ENCODE measurements at regions of chr11 and their contacts with region 1.

Region 1: DNA sequence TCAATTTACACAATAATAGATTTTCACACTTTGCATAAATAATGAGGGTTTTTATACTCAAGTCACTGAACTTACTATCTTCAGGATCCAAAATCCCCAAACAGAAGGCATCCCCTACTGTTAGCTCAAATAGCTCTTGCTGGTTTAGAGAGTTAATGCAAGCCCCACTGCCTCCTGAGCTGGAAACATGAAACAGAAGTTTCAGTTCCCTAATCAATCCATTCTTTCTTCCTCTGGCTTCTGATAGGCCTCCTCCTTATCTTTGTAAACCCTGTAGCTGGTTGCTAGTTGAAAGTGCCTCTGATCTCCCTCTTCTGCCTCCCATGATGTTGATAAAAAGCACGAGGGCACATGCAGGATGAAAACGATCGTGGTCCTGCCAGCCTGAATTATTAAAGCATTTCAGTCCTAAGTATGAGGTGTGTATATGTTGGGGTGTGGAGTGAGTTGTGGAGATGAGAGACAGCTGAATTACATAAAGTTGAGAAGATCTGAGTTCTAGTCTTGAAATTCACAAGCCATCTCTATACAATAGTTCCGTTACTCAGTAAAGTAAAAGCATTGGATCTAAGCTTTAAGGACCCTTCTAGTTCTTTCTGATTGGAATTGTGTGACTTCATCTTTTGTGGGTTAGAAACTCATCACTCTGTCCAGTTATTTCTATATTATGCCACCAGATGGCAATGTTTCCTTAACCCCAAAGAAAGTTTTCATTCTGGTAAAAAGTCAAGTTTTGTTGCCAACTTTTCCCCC is 35.0 kb upstream of the EHF start:
- DNase-seq: no peak
- ATAC-seq: peak; percentile 74
- H3K4me3 ChIP-seq: no peak overlapping the region
- H3K4me1 ChIP-seq: no peaks in the 10 kb centered on the region
- CTCF ChIP-seq: peak; percentile 37

Region 2: DNA sequence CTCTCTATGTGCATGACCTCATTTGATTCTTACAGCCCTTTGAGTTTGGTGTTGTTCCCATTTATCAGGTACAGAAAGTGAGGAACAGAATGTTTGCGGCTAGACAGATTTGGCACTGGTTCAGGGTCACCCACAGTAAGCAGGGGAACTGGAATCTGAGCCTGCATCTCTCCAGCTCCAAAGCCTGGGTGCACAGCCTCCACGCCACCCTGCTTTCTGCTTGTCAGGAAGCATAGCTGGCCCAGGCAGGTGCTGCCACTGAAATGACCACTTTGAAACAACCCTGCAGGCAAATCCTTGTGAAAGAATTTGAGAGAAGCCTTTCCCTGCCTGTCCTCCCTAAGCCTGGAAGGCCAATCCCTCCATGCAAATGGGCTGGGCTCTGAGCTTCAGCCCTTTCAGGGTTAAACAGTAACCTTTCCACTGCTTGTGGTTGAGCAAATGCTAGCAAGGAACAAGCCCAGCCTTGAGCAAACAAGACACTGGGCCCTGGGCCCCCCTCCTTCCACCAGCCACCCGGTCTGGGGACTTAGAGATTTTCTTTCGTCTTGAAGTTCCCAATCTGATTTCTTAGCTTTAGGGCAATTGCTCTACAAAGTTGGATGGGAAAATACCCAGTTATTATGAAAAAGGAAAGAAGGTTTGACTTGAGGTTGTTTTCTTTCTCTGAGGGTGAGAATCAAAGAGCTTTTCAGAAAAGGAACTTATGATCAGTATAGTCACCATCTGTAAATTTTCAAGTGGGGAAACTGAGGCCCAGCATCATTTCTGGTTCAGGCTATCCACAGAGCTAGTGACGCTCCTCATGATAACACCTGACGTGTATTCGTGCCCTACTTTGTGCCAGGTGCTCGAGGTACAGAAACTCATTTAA is 54.4 kb after region 1 on chr11:
- intact Hi-C with region 1: loop called in 1 of 2 experiments (anchors 10 kb)
- DNase-seq: peak; percentile 83 to 89 (median 84)
- ATAC-seq: peak; percentile 84
- H3K4me3 ChIP-seq: no peak overlapping the region
- H3K4me1 ChIP-seq: peaks cover 20% of the 10 kb centered on the region
- CTCF ChIP-seq: no peak

Region 3: DNA sequence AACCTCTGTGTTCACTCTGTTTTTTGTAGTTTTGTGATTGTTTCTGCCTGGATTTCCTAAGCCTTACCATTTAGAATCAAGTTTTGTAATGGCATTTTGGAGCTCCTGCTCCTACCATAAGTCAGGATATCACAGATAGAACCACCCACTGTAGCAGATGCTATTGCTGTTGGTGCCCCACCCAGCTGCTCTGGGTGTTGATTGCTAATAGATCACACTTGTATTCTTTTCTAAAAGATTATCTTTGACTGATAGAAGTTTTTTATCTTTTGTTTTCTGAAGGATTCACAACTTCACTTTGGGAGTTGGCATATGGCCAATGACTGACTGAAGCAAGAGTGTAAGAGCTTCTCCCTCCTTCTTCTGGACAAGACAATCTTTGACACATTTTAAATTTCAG is 111.0 kb after region 1 on chr11:
- intact Hi-C with region 1: no loop called
- DNase-seq: no peak
- ATAC-seq: no peak
- H3K4me3 ChIP-seq: no peak overlapping the region
- H3K4me1 ChIP-seq: no peaks in the 10 kb centered on the region
- CTCF ChIP-seq: no peak

Region 4: GRCh38 chr11:34890812-34891211 is 304.9 kb after region 1 on chr11:
- intact Hi-C with region 1: loop called in 1 of 2 experiments (anchors 2 kb)
- DNase-seq: peak in 1 of 3 donors; percentile 25
- ATAC-seq: peak; percentile 66
- H3K4me3 ChIP-seq: no peak overlapping the region
- H3K4me1 ChIP-seq: peaks cover 3% of the 10 kb centered on the region
- CTCF ChIP-seq: no peak

Region 5: DNA sequence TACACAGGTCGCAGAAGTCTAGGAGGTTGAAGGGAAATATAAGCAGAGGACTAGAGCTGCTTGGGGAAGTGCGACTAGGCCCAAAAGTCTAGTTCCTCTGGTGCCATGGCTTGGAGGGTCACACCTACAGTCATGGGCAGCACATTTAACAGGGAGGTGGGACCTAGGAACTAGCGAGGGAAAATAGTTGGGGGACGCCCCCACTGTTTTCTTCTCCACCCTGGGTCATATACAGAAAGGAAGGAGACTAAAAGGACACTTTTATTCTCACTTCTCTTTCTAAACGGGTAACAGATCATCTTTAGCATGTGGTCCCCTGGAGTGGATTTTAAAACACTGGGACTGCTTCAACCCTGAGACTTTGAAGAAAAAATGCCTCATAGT is 313.7 kb after region 1 on chr11:
- intact Hi-C with region 1: loop called in 1 of 2 experiments (anchors 10 kb)
- DNase-seq: no peak
- ATAC-seq: no peak
- H3K4me3 ChIP-seq: no peak overlapping the region
- H3K4me1 ChIP-seq: no peaks in the 10 kb centered on the region
- CTCF ChIP-seq: no peak